ENCODE measurements at regions of chr5 and their contacts with region 1.

Region 1: GRCh38 chr5:35159370-35159742 is 70.9 kb downstream of the PRLR start:
- DNase-seq: peak; percentile 90
- ATAC-seq: peak; percentile 100
- H3K4me3 ChIP-seq: no peak overlapping the region
- H3K27ac ChIP-seq: peak overlapping the region; percentile 74
- H3K4me1 ChIP-seq: peaks cover 31% of the 10 kb centered on the region
- H3K27me3 ChIP-seq: no peaks in the 10 kb centered on the region
- CTCF ChIP-seq: no peak
- EP300 ChIP-seq: peak in 1 of 2 experiments; percentile 80; a peak in 2 of 4 replicates
- POLR2A ChIP-seq: no peak
- RAD21 ChIP-seq: no peak

Region 2: DNA sequence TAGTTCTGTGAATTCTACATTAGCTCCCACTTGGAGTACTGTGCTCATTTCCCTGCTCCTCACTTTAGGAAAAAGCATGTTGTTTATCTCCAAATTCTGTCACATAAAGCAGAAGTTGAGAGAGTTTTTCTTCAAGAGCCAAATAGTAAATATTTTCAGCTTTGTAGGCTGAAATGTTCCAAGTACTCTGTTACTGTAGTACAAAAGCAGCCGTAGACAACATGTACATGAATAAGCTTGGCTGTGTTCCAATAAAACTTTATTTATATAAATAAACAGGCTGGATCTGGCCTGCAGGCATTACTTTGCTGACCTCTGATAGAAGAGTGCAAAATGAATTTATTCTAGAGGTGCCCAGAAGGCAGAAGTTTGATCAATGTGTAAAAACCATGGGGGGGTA is 38.6 kb before region 1 on chr5:
- CTCF ChIA-PET with region 1: no interaction called
- POLR2A ChIA-PET with region 1: no interaction called
- in situ Hi-C with region 1: no loop called
- intact Hi-C with region 1: loop called (anchors 5 kb)
- DNase-seq: no peak
- ATAC-seq: no peak
- H3K4me3 ChIP-seq: no peak overlapping the region
- H3K27ac ChIP-seq: no peak overlapping the region
- H3K4me1 ChIP-seq: peaks cover 49% of the 10 kb centered on the region
- H3K27me3 ChIP-seq: no peaks in the 10 kb centered on the region
- CTCF ChIP-seq: no peak
- EP300 ChIP-seq: no peak
- POLR2A ChIP-seq: no peak
- RAD21 ChIP-seq: no peak

Region 3: DNA sequence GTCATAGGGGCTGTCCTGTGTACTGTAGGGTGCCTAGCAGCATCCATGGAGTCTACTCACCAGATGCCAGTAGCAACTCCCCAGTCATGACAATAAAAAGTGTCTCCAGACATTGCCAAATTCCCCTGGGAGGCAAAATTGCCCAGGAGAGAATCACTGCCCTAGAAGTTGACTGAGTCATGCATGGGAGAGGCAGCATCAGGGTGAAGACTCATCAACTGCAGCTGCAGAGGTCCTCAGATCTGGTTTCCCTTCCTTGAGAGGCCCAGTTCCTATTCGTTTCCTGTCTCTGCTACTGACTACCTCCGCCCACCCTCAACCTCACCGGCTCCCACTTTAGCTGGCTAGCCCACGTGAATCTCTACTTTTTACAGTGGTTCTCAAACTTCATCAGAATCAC is 23.0 kb before region 1 on chr5:
- CTCF ChIA-PET with region 1: no interaction called
- POLR2A ChIA-PET with region 1: interaction called, 12 read pairs
- in situ Hi-C with region 1: no loop called
- intact Hi-C with region 1: no loop called
- DNase-seq: no peak
- ATAC-seq: no peak
- H3K4me3 ChIP-seq: no peak overlapping the region
- H3K27ac ChIP-seq: no peak overlapping the region
- H3K4me1 ChIP-seq: peaks cover 60% of the 10 kb centered on the region
- H3K27me3 ChIP-seq: no peaks in the 10 kb centered on the region
- CTCF ChIP-seq: no peak
- EP300 ChIP-seq: no peak
- POLR2A ChIP-seq: no peak
- RAD21 ChIP-seq: no peak

Measured in HepG2 (cell line).